GM12878 (cell line): ENCODE measurements at regions of chr18 and their contacts with region 1.

Region 1: GRCh38 chr18:80171054-80171872 is 62.2 kb downstream of the ADNP2 start:
- DNase-seq: no peak
- ATAC-seq: peak; percentile 87
- H3K4me3 ChIP-seq: no peak overlapping the region
- H3K27ac ChIP-seq: no peak overlapping the region
- H3K4me1 ChIP-seq: no peaks in the 10 kb centered on the region
- H3K27me3 ChIP-seq: no peaks in the 10 kb centered on the region
- CTCF ChIP-seq: peak; percentile 83 to 93 (median 83)
- EP300 ChIP-seq: no peak
- POLR2A ChIP-seq: no peak
- RAD21 ChIP-seq: peak; percentile 85

Region 2: GRCh38 chr18:79738581-79739439 is 432.5 kb before region 1 on chr18:
- CTCF ChIA-PET with region 1: no interaction called
- POLR2A ChIA-PET with region 1: no interaction called
- RAD21 ChIA-PET with region 1: no interaction called
- SMC1A ChIA-PET with region 1: no interaction called
- in situ Hi-C with region 1: no loop called
- intact Hi-C with region 1: no loop called
- DNase-seq: no peak
- ATAC-seq: no peak
- H3K4me3 ChIP-seq: no peak overlapping the region
- H3K27ac ChIP-seq: no peak overlapping the region
- H3K4me1 ChIP-seq: no peaks in the 10 kb centered on the region
- H3K27me3 ChIP-seq: no peaks in the 10 kb centered on the region
- CTCF ChIP-seq: no peak
- EP300 ChIP-seq: no peak
- POLR2A ChIP-seq: no peak
- RAD21 ChIP-seq: no peak

Region 3: GRCh38 chr18:80194874-80195570 is 23.8 kb after region 1 on chr18:
- CTCF ChIA-PET with region 1: interaction called, 14 read pairs
- POLR2A ChIA-PET with region 1: interaction called, 8 read pairs
- RAD21 ChIA-PET with region 1: interaction called, 4 read pairs
- SMC1A ChIA-PET with region 1: interaction called, 4 read pairs
- in situ Hi-C with region 1: no loop called
- intact Hi-C with region 1: no loop called
- DNase-seq: peak; percentile 48
- ATAC-seq: peak; percentile 89
- H3K4me3 ChIP-seq: no peak overlapping the region
- H3K27ac ChIP-seq: no peak overlapping the region
- H3K4me1 ChIP-seq: no peaks in the 10 kb centered on the region
- H3K27me3 ChIP-seq: peaks cover 0 to 2% of the 10 kb centered on the region in 2 experiments; a peak in 1 of 4 replicates
- CTCF ChIP-seq: no peak
- EP300 ChIP-seq: no peak
- POLR2A ChIP-seq: no peak
- RAD21 ChIP-seq: no peak

Region 4: GRCh38 chr18:80200171-80200931 is 29.1 kb after region 1 on chr18:
- CTCF ChIA-PET with region 1: interaction called, 14 read pairs
- POLR2A ChIA-PET with region 1: no interaction called
- RAD21 ChIA-PET with region 1: interaction called, 4 read pairs
- SMC1A ChIA-PET with region 1: interaction called, 3 read pairs
- in situ Hi-C with region 1: no loop called
- intact Hi-C with region 1: no loop called
- DNase-seq: no peak
- ATAC-seq: no peak
- H3K4me3 ChIP-seq: no peak overlapping the region
- H3K27ac ChIP-seq: no peak overlapping the region
- H3K4me1 ChIP-seq: peaks cover 27% of the 10 kb centered on the region
- H3K27me3 ChIP-seq: no peaks in the 10 kb centered on the region
- CTCF ChIP-seq: peak in 1 of 3 experiments; percentile 41; a peak in 1 of 6 replicates
- EP300 ChIP-seq: no peak
- POLR2A ChIP-seq: no peak
- RAD21 ChIP-seq: peak; percentile 63

Region 5: GRCh38 chr18:80245781-80246444 is 74.7 kb after region 1 on chr18:
- CTCF ChIA-PET with region 1: interaction called, 19 read pairs
- POLR2A ChIA-PET with region 1: no interaction called
- RAD21 ChIA-PET with region 1: interaction called, 16 read pairs
- SMC1A ChIA-PET with region 1: interaction called, 5 read pairs
- in situ Hi-C with region 1: no loop called
- intact Hi-C with region 1: no loop called
- DNase-seq: no peak
- ATAC-seq: peak; percentile 16; the same call in 2 of the 3 replicates
- H3K4me3 ChIP-seq: no peak overlapping the region
- H3K27ac ChIP-seq: no peak overlapping the region
- H3K4me1 ChIP-seq: no peaks in the 10 kb centered on the region
- H3K27me3 ChIP-seq: peaks cover 2 to 3% of the 10 kb centered on the region in 2 experiments; a peak in 2 of 4 replicates
- CTCF ChIP-seq: no peak
- EP300 ChIP-seq: no peak
- POLR2A ChIP-seq: no peak
- RAD21 ChIP-seq: no peak

Region 6: GRCh38 chr18:80253871-80254492 is 82.7 kb after region 1 on chr18:
- CTCF ChIA-PET with region 1: interaction called, 55 read pairs
- POLR2A ChIA-PET with region 1: no interaction called
- RAD21 ChIA-PET with region 1: interaction called, 30 read pairs
- SMC1A ChIA-PET with region 1: interaction called, 34 read pairs
- in situ Hi-C with region 1: no loop called
- intact Hi-C with region 1: loop called (anchors 1 kb)
- DNase-seq: no peak
- ATAC-seq: peak; percentile 87
- H3K4me3 ChIP-seq: no peak overlapping the region
- H3K27ac ChIP-seq: no peak overlapping the region
- H3K4me1 ChIP-seq: no peaks in the 10 kb centered on the region
- H3K27me3 ChIP-seq: peaks cover 0 to 2% of the 10 kb centered on the region in 2 experiments; a peak in 1 of 4 replicates
- CTCF ChIP-seq: no peak
- EP300 ChIP-seq: no peak
- POLR2A ChIP-seq: no peak
- RAD21 ChIP-seq: no peak